ENCODE measurements at regions of chr6 and their contacts with region 1.

Region 1: GRCh38 chr6:26234421-26235296 is 130.3 kb upstream of the BTN3A2 start:
- DNase-seq: peak; percentile 55 to 88 (median 66)
- ATAC-seq: peak; percentile 63
- H3K4me3 ChIP-seq: peak overlapping the region; percentile 66 to 76
- H3K4me3 Mint-ChIP-seq: peak overlapping the region; percentile 85
- H3K27ac ChIP-seq: peak overlapping the region; percentile 84 to 92
- H3K27ac Mint-ChIP-seq: peak overlapping the region; percentile 93
- H3K4me1 ChIP-seq: peaks cover 14% of the 10 kb centered on the region
- H3K4me1 Mint-ChIP-seq: peaks cover 31% of the 10 kb centered on the region
- H3K27me3 ChIP-seq: no peaks in the 10 kb centered on the region
- H3K27me3 Mint-ChIP-seq: no peaks in the 10 kb centered on the region
- CTCF ChIP-seq: no peak

Region 2: DNA sequence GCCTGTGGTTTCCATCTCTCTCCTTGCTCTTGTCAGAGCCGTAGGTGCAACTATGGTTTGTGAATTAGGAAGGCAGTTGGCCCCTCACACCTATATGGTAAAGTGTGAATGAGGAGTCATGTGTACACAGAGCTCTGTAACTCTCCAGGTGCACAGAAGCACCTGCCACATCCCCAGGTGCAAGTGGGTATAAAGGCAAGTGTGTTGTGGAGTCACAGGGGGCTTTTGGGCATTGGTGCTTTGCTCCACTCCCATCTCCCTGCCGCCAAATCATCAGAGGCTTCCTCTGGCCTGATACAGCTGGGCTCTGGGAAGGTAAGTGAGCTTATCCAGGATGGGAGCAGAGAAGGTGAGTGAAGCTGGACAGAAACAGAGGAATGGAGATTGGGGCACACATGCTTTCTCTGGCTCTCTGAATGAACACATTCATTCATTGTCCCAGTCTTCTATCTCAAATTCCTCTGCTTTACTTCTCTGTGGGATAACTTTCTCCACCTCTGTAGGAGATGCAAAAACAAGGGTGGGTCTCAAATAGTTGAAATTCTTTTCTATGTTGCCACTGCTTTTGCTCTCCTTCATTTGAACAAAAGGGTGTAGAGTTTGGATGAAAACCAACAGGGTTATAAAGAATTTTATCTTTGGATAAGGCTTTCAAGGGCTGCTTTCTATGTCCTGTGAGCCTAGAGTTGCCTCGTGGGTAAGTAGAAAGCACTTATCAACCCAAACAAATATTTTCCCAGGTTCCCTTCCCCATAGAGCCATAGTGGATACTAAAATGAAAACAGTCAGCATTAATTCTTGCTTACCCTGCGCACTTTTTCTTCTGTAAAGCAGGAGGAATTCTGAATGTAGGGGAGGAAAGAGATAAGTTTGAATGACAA is 1253.9 kb before region 1 on chr6:
- CTCF ChIA-PET with region 1: no interaction called
- POLR2A ChIA-PET with region 1: no interaction called
- intact Hi-C with region 1: no loop called
- DNase-seq: peak in 1 of 9 experiments; percentile 26
- ATAC-seq: peak; percentile 57
- H3K4me3 ChIP-seq: no peak overlapping the region
- H3K4me3 Mint-ChIP-seq: no peak overlapping the region
- H3K27ac ChIP-seq: peak overlapping the region in 1 of 2 experiments; percentile 12
- H3K27ac Mint-ChIP-seq: peak overlapping the region; percentile 25
- H3K4me1 ChIP-seq: peaks cover 42% of the 10 kb centered on the region
- H3K4me1 Mint-ChIP-seq: peaks cover 65% of the 10 kb centered on the region
- H3K27me3 ChIP-seq: no peaks in the 10 kb centered on the region
- H3K27me3 Mint-ChIP-seq: no peaks in the 10 kb centered on the region
- CTCF ChIP-seq: no peak

Region 3: GRCh38 chr6:26031595-26032339 is 202.9 kb before region 1 on chr6:
- CTCF ChIA-PET with region 1: no interaction called
- POLR2A ChIA-PET with region 1: interaction called, 22 read pairs
- intact Hi-C with region 1: no loop called
- DNase-seq: peak; percentile 79 to 93 (median 88)
- ATAC-seq: peak; percentile 63
- H3K4me3 ChIP-seq: peak overlapping the region; percentile 68 to 71
- H3K4me3 Mint-ChIP-seq: peak overlapping the region; percentile 93
- H3K27ac ChIP-seq: peak overlapping the region; percentile 76 to 79
- H3K27ac Mint-ChIP-seq: peak overlapping the region; percentile 96
- H3K4me1 ChIP-seq: peaks cover 31% of the 10 kb centered on the region
- H3K4me1 Mint-ChIP-seq: peaks cover 46% of the 10 kb centered on the region
- H3K27me3 ChIP-seq: no peaks in the 10 kb centered on the region
- H3K27me3 Mint-ChIP-seq: no peaks in the 10 kb centered on the region
- CTCF ChIP-seq: no peak

Region 4: GRCh38 chr6:26175428-26176181 is 59.1 kb before region 1 on chr6:
- CTCF ChIA-PET with region 1: interaction called, 3 read pairs
- POLR2A ChIA-PET with region 1: interaction called, 63 read pairs
- intact Hi-C with region 1: loop called in 1 of 2 experiments (anchors 10 kb)
- DNase-seq: peak in 7 of 9 experiments; percentile 33 to 87 (median 53)
- ATAC-seq: no peak
- H3K4me3 ChIP-seq: no peak overlapping the region
- H3K4me3 Mint-ChIP-seq: peak overlapping the region; percentile 3
- H3K27ac ChIP-seq: no peak overlapping the region
- H3K27ac Mint-ChIP-seq: peak overlapping the region; percentile 63
- H3K4me1 ChIP-seq: peaks cover 26% of the 10 kb centered on the region
- H3K4me1 Mint-ChIP-seq: peaks cover 39% of the 10 kb centered on the region
- H3K27me3 ChIP-seq: no peaks in the 10 kb centered on the region
- H3K27me3 Mint-ChIP-seq: no peaks in the 10 kb centered on the region
- CTCF ChIP-seq: peak; percentile 93

Region 5: GRCh38 chr6:26204332-26205165 is 30.1 kb before region 1 on chr6:
- CTCF ChIA-PET with region 1: interaction called, 6 read pairs
- POLR2A ChIA-PET with region 1: interaction called, 428 read pairs
- intact Hi-C with region 1: loop called in 1 of 2 experiments (anchors 1 kb)
- DNase-seq: peak; percentile 75 to 98 (median 84)
- ATAC-seq: peak; percentile 74
- H3K4me3 ChIP-seq: peak overlapping the region; percentile 54 to 70
- H3K4me3 Mint-ChIP-seq: no peak overlapping the region
- H3K27ac ChIP-seq: peak overlapping the region; percentile 91
- H3K27ac Mint-ChIP-seq: no peak overlapping the region
- H3K4me1 ChIP-seq: peaks cover 31% of the 10 kb centered on the region
- H3K4me1 Mint-ChIP-seq: peaks cover 23% of the 10 kb centered on the region
- H3K27me3 ChIP-seq: no peaks in the 10 kb centered on the region
- H3K27me3 Mint-ChIP-seq: no peaks in the 10 kb centered on the region
- CTCF ChIP-seq: no peak

Region 6: DNA sequence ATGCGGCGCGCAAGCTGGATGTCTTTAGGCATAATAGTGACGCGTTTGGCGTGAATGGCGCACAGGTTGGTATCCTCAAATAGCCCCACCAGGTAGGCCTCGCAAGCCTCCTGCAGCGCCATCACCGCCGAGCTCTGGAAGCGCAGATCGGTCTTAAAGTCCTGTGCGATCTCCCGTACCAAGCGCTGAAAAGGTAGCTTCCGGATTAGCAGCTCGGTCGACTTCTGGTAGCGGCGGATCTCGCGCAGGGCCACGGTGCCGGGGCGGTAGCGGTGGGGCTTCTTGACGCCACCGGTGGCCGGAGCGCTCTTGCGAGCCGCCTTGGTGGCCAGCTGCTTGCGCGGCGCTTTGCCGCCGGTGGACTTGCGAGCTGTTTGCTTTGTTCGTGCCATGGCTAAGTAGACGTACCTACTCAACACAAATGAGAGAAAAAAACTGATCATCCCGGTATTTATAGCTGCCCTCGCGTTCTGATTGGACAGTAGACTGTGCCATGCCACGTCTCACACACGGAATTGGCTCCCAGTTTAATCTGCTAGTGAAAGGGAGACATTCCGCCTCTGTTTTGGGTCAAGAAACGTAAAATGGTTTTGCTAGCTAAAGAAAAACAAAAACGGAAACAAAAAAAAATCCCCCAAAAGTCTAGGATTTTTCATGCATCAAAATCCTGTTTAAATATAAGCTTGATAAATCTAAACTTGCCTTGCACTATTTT is 1637.4 kb after region 1 on chr6:
- CTCF ChIA-PET with region 1: no interaction called
- POLR2A ChIA-PET with region 1: interaction called, 17 read pairs
- intact Hi-C with region 1: no loop called
- DNase-seq: peak; percentile 72 to 97 (median 85)
- ATAC-seq: peak; percentile 75
- H3K4me3 ChIP-seq: peak overlapping the region; percentile 54 to 67
- H3K4me3 Mint-ChIP-seq: peak overlapping the region; percentile 82
- H3K27ac ChIP-seq: peak overlapping the region; percentile 81 to 86
- H3K27ac Mint-ChIP-seq: peak overlapping the region; percentile 98
- H3K4me1 ChIP-seq: peaks cover 20% of the 10 kb centered on the region
- H3K4me1 Mint-ChIP-seq: peaks cover 36% of the 10 kb centered on the region
- H3K27me3 ChIP-seq: peaks cover 0 to 3% of the 10 kb centered on the region in 2 experiments
- H3K27me3 Mint-ChIP-seq: no peaks in the 10 kb centered on the region
- CTCF ChIP-seq: peak; percentile 48

Measured in CD8-positive, alpha-beta T cell (primary cell).